ENCODE measurements at regions of chr3 and their contacts with region 1.

Region 1: DNA sequence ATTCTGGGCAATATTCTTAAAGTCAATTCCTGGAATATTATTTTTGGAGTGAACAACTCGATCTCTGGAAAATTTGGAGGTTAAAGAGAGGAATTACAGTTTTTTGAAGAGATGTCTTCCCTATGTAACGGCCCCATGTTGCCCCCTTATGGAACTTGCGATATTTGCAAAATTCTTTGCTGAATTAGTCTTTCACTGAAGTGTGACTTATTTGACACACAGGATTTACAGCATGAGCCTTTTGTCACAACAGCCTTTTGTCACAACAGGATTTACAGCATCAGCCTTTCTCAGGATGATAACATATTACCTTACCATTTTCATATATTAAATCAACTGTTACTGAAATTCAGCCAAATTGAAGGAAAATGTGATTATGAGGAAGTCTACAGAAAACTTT is 37.8 kb upstream of the SPTSSB start:
- DNase-seq: peak; percentile 94
- ATAC-seq: no peak
- H3K4me3 ChIP-seq: no peak overlapping the region
- H3K27ac ChIP-seq: peak overlapping the region; percentile 98
- H3K4me1 ChIP-seq: peaks cover 82% of the 10 kb centered on the region
- H3K27me3 ChIP-seq: no peaks in the 10 kb centered on the region
- CTCF ChIP-seq: peak; percentile 92

Region 2: DNA sequence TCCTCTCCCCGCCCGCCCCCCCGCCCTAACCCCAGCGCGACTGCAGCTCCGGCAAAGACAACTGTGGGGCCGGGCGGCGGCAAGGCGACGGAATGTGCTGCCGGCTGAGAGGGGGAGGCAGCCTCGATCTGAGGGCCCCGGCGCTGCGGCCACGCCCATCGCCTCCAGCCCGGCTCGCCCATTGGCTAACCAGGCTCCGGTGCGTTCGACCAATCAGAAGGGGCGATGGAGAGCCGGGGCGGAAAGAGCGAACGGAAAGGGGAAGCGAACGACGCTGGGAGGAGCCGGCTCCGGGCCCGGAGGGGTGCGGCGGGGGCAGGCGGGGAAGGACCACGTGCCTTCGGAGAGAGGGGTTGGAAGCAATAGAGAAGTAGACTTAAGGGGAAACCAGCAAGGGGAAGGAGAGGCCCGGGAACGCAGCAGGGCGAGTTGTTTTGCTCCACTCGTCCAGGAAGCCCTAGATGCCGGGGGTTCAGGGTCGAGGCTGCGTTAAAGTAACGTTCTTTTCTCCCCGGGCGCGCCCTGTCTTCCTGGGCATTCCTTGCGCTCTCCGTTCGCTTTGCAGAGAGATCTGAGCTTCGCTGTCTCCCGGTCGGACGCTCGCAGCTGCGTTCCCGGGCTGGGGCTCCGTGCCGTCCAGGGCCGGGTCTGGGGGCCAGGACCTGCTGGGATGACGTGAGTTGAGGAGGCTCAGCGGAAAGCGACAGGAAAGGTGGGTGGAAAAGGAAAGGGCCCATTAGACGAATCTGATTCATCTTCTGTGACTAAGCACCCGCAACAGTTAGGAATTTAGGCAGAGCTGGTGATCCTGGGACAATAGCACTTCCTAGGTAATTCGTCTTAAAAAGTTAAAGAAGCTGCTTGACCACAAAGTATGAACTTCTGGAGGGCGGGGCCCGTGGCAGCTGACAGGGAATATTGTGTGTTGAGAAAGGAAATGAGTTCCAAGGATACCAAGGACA is 843.3 kb before region 1 on chr3 and contains the start of gene KPNA4:
- CTCF ChIA-PET with region 1: no interaction called
- POLR2A ChIA-PET with region 1: no interaction called
- intact Hi-C with region 1: loop called (anchors 2 kb)
- DNase-seq: peak; percentile 99
- ATAC-seq: peak; percentile 84
- H3K4me3 ChIP-seq: peak within 1 kb of the TSS; percentile 79
- H3K27ac ChIP-seq: peak within 1 kb of the TSS; percentile 99
- H3K4me1 ChIP-seq: peaks cover 45% of the 10 kb centered on the region
- H3K27me3 ChIP-seq: no peaks in the 10 kb centered on the region
- CTCF ChIP-seq: no peak
- total RNA-seq, gene KPNA4: 31.5 and 33.7 TPM in 2 replicates

Region 3: GRCh38 chr3:161220850-161221753 is 188.0 kb before region 1 on chr3 and contains the start of gene NMD3:
- CTCF ChIA-PET with region 1: no interaction called
- POLR2A ChIA-PET with region 1: no interaction called
- intact Hi-C with region 1: loop called (anchors 5 kb)
- DNase-seq: peak; percentile 98
- ATAC-seq: peak; percentile 80
- H3K4me3 ChIP-seq: peak within 1 kb of the TSS; percentile 96
- H3K27ac ChIP-seq: peak within 1 kb of the TSS; percentile 72
- H3K4me1 ChIP-seq: peaks cover 41% of the 10 kb centered on the region
- H3K27me3 ChIP-seq: no peaks in the 10 kb centered on the region
- CTCF ChIP-seq: no peak
- total RNA-seq, gene NMD3: 65.3 and 72.6 TPM in 2 replicates

Region 4: DNA sequence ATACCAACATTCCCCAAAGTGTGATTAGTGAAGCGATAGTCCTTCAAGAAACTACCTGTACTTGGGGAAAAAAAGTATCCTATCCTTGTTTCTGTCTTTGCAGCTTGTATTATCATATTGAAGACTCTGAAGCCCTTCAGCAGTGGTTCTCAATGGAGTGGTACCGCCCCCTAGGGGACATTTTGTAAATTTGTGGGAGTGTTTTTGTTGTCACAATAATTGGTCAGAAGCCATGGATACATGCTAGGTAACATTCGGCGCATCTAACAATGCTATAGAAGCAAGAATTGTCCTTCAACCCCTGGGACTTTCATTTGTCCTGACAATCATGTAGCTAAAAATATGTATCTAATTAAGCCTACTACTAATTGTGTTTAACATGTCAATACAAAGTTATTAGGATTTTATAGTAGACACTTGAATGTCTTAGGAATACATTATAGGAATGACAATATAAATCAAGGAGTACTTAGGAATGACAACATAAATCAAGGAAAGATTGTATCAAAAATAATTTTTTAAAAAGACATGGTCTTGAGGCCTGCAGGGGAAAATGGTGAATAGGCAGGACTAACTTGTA is 134.3 kb before region 1 on chr3:
- CTCF ChIA-PET with region 1: interaction called, 4 read pairs
- POLR2A ChIA-PET with region 1: no interaction called
- intact Hi-C with region 1: loop called (anchors 1 kb)
- DNase-seq: peak; percentile 85
- ATAC-seq: peak; percentile 44
- H3K4me3 ChIP-seq: no peak overlapping the region
- H3K27ac ChIP-seq: peak overlapping the region; percentile 50
- H3K4me1 ChIP-seq: peaks cover 20% of the 10 kb centered on the region
- H3K27me3 ChIP-seq: no peaks in the 10 kb centered on the region
- CTCF ChIP-seq: peak; percentile 93

Region 5: DNA sequence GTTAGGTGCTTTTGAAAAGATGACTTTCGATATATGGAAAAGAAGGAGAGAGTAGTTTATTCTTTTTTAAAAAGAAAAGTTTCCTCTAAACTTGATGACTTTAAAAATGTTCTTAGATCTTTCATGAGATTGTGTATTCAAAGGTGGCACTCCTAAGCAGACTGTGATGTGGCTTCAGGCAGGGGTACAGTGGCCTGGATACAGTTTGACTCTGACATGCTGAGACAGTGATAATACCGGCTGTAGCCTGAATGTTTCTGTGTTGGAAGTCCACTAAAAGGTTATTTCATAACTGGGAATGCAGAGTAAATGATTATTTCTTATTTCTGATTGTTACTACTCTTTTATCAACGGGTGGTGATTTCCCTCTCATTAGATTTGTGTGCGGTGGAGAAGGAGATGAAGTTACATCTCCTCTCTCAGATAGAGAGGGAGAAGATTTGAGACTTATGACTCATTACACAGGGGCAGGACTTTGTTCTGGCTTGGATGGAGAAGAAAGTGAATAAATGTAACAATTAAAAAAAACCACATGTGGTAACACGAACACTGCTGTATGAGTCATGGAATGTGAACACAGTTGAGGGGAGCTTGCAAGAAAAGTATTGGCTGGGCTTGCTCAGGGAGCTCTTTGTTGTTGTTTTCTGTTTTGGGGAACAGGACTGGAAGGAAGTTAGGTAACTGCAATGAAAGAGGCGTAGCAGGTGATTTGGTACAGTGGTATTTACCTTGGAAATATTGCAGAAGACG is 59.4 kb before region 1 on chr3:
- CTCF ChIA-PET with region 1: no interaction called
- POLR2A ChIA-PET with region 1: interaction called, 3 read pairs
- intact Hi-C with region 1: loop called (anchors 1 kb)
- DNase-seq: peak; percentile 93
- ATAC-seq: peak; percentile 78
- H3K4me3 ChIP-seq: no peak overlapping the region
- H3K27ac ChIP-seq: peak overlapping the region; percentile 73
- H3K4me1 ChIP-seq: peaks cover 46% of the 10 kb centered on the region
- H3K27me3 ChIP-seq: no peaks in the 10 kb centered on the region
- CTCF ChIP-seq: no peak

Measured in PC-3 (cell line).